AG04449 (cell line): ENCODE measurements at regions of chr10 and their contacts with region 1.

Region 1: GRCh38 chr10:70558871-70559810 is 43.4 kb downstream of the PRF1 start:
- DNase-seq: no peak
- H3K4me3 ChIP-seq: no peak overlapping the region
- CTCF ChIP-seq: peak; percentile 63

Region 2: GRCh38 chr10:70575874-70576802 is 17.0 kb after region 1 on chr10:
- CTCF ChIA-PET with region 1: interaction called, 15 read pairs
- POLR2A ChIA-PET with region 1: no interaction called
- DNase-seq: no peak
- H3K4me3 ChIP-seq: no peak overlapping the region
- CTCF ChIP-seq: no peak